H1 (cell line): ENCODE measurements at regions of chr13 and their contacts with region 1.

Region 1: DNA sequence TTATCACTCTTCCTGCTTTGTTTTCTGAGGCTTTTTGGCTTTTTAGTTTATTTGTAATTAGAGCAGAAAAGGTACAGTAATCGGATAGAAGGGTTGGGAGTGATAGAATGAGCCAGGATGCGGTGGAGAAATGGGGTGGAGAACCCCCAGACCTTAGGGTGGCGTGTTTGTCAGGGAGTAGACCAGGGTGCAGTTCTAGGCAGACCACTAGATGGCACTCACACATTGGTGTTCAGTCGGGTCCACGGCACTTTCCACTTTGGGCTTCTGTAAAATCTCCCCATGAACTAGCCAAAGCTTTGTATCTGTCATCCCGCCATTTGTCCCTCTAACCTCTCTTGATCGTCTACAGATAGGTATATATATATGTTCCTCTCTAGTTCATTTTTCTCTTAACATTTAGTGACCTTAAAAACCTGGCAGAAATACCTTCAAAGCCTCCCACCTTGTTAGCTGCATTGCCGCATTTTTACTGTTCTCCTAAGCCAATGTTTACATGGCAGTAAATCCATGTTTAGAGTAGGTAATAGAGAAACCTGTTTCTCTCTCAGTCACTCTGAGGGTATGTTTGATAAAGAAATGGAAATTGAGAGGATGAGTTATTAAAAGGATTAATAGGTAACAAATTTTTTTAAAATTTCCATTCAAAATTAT is 154.9 kb downstream of the TM9SF2 start:
- DNase-seq: peak; percentile 46 to 96
- H3K4me3 ChIP-seq: peak overlapping the region in 1 of 4 experiments; percentile 16; a peak in 1 of 8 replicates
- H3K27ac ChIP-seq: no peak overlapping the region
- H3K4me1 ChIP-seq: peaks cover 10 to 24% (median 19%) of the 10 kb centered on the region in 4 experiments
- H3K27me3 ChIP-seq: no peaks in the 10 kb centered on the region
- CTCF ChIP-seq: peak; percentile 92 to 98 (median 97)
- EP300 ChIP-seq: no peak
- POLR2A ChIP-seq: no peak
- RAD21 ChIP-seq: peak; percentile 99

Region 2: DNA sequence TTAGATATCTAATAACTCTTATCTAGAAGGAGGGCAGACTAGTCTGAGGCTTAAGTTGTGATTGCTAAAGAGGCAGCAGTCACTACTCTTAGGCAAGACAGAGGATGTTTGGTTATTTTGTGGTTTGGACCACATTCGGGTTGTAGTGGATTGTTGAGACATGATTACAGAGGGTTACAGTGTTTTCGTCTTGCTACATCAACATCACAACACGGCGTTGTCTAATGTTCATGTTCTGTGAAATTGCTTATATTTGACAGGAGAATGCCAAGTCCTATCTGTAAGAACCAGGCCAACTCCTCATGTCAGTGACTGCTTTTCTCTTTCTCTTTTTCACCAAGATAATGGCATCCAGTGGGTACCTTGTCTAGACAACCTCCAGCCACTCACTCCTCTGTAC is 171.7 kb before region 1 on chr13:
- CTCF ChIA-PET with region 1: no interaction called
- POLR2A ChIA-PET with region 1: no interaction called
- DNase-seq: no peak
- H3K4me3 ChIP-seq: no peak overlapping the region
- H3K27ac ChIP-seq: no peak overlapping the region
- H3K4me1 ChIP-seq: no peaks in the 10 kb centered on the region
- H3K27me3 ChIP-seq: no peaks in the 10 kb centered on the region; a peak in 1 of 7 replicates
- CTCF ChIP-seq: no peak
- EP300 ChIP-seq: no peak
- POLR2A ChIP-seq: no peak
- RAD21 ChIP-seq: no peak

Region 3: GRCh38 chr13:99542788-99543406 is 113.3 kb before region 1 on chr13:
- CTCF ChIA-PET with region 1: no interaction called
- POLR2A ChIA-PET with region 1: no interaction called
- DNase-seq: no peak
- H3K4me3 ChIP-seq: no peak overlapping the region
- H3K27ac ChIP-seq: no peak overlapping the region
- H3K4me1 ChIP-seq: no peaks in the 10 kb centered on the region
- H3K27me3 ChIP-seq: no peaks in the 10 kb centered on the region
- CTCF ChIP-seq: no peak
- EP300 ChIP-seq: no peak
- POLR2A ChIP-seq: no peak
- RAD21 ChIP-seq: no peak

Region 4: DNA sequence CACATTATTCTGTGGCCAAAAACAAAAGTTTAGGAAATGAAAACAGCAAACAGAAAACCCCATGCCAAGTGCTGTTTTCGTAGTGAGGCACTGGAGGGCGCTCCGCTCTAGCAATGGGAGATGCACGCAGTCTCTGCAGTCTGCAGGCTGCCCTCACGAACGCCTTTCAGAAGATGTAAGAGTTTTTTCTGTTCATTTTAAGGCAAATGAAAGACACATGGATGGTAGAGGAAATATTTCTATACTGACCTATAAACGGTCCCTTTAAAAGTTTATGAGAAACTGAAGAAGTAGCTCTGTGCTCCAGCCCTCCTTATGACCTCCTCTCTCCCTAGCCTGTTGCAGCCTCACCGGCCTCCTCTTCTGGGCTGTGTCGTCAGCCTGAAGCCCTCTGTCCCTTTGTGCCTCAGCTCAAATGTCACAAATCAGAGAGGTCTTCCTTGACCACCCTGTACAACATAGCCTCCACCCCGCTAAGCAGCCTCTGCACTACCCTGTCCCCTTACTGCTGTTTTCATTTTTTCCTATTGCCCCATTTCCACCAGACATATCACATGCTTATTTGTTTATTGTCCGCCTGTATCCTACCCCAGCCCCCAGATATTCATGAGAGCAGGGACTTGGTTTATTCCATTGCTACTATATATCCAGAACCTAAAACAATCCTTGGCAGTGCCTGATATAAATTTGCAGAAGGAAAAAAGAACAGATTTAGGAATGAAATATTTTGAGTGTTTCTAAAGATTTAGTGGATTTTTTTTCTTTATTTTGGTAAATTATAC is 38.6 kb before region 1 on chr13:
- CTCF ChIA-PET with region 1: interaction called, 21 read pairs
- POLR2A ChIA-PET with region 1: interaction called, 3 read pairs
- DNase-seq: peak in 1 of 2 experiments; percentile 73
- H3K4me3 ChIP-seq: no peak overlapping the region
- H3K27ac ChIP-seq: no peak overlapping the region
- H3K4me1 ChIP-seq: peaks cover 0 to 5% (median 0%) of the 10 kb centered on the region in 4 experiments; a peak in 2 of 7 replicates
- H3K27me3 ChIP-seq: no peaks in the 10 kb centered on the region
- CTCF ChIP-seq: peak; percentile 87 to 93 (median 88)
- EP300 ChIP-seq: no peak
- POLR2A ChIP-seq: no peak
- RAD21 ChIP-seq: peak; percentile 99

Region 5: GRCh38 chr13:99686157-99686572 is 29.9 kb after region 1 on chr13:
- CTCF ChIA-PET with region 1: interaction called, 10 read pairs
- POLR2A ChIA-PET with region 1: interaction called, 63 read pairs
- DNase-seq: peak in 1 of 2 experiments; percentile 52
- H3K4me3 ChIP-seq: peak overlapping the region in 1 of 4 experiments; percentile 28; a peak in 1 of 8 replicates
- H3K27ac ChIP-seq: peak overlapping the region; percentile 56; the same call in 1 of the 2 replicates
- H3K4me1 ChIP-seq: peaks cover 17 to 41% (median 35%) of the 10 kb centered on the region in 4 experiments
- H3K27me3 ChIP-seq: no peaks in the 10 kb centered on the region
- CTCF ChIP-seq: no peak
- EP300 ChIP-seq: no peak
- POLR2A ChIP-seq: no peak
- RAD21 ChIP-seq: no peak

Region 6: GRCh38 chr13:99766641-99767045 is 110.4 kb after region 1 on chr13:
- CTCF ChIA-PET with region 1: interaction called, 20 read pairs
- POLR2A ChIA-PET with region 1: interaction called, 6 read pairs
- DNase-seq: peak; percentile 33 to 63
- H3K4me3 ChIP-seq: no peak overlapping the region
- H3K27ac ChIP-seq: no peak overlapping the region; the same call in 1 of the 2 replicates
- H3K4me1 ChIP-seq: peaks cover 5 to 12% (median 7%) of the 10 kb centered on the region in 4 experiments; a peak in 5 of 7 replicates
- H3K27me3 ChIP-seq: no peaks in the 10 kb centered on the region
- CTCF ChIP-seq: peak in 2 of 3 experiments; percentile 64 to 78; a peak in 3 of 4 replicates
- EP300 ChIP-seq: no peak
- POLR2A ChIP-seq: no peak
- RAD21 ChIP-seq: peak; percentile 89 to 92

Region 7: DNA sequence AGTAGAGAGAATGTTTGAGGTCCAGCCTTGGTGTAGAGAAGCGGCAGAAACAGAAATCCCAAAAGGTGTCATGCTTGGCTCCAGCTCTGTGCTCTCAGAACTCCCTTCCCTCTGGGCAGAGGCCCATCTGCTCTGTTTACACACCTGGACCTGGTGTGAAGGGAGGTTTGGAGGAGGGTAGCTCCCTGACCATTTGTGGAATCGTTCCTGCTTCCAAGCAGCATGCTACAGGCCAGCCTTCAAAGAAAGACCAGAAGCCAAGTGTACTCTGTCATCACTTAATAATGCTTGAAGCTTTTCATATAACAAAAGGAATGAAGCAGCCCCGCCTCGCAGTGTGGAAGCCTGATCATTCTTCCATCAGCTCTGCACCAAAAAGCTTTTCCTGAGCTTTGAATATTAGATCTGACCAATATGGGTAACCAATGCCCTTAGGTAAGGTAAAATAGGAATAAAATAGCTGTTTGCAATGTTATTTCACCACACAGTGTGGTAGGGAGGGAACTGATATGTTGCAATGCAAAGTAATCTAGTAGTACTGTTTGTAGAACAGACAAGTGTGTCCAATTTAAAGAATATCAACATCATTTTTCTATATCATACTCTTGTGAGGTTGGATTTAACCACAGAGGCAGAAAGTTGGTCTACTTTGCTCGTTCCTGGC is 252.1 kb after region 1 on chr13:
- CTCF ChIA-PET with region 1: interaction called, 58 read pairs
- POLR2A ChIA-PET with region 1: no interaction called
- DNase-seq: no peak
- H3K4me3 ChIP-seq: no peak overlapping the region
- H3K27ac ChIP-seq: no peak overlapping the region
- H3K4me1 ChIP-seq: peaks cover 1 to 9% (median 3%) of the 10 kb centered on the region in 4 experiments; a peak in 4 of 7 replicates
- H3K27me3 ChIP-seq: no peaks in the 10 kb centered on the region; a peak in 1 of 7 replicates
- CTCF ChIP-seq: no peak
- EP300 ChIP-seq: no peak
- POLR2A ChIP-seq: no peak
- RAD21 ChIP-seq: no peak

Region 8: GRCh38 chr13:99955747-99956472 is 299.7 kb after region 1 on chr13:
- CTCF ChIA-PET with region 1: interaction called, 92 read pairs
- POLR2A ChIA-PET with region 1: interaction called, 7 read pairs
- DNase-seq: peak in 1 of 2 experiments; percentile 72
- H3K4me3 ChIP-seq: peak overlapping the region; percentile 45 to 69 (median 60)
- H3K27ac ChIP-seq: no peak overlapping the region
- H3K4me1 ChIP-seq: peaks cover 7 to 35% (median 20%) of the 10 kb centered on the region in 4 experiments
- H3K27me3 ChIP-seq: peaks cover 12 to 58% (median 47%) of the 10 kb centered on the region in 4 experiments; a peak in 6 of 7 replicates
- CTCF ChIP-seq: no peak
- EP300 ChIP-seq: no peak
- POLR2A ChIP-seq: no peak
- RAD21 ChIP-seq: no peak

Region 9: GRCh38 chr13:99990126-99990977 is 334.1 kb after region 1 on chr13:
- CTCF ChIA-PET with region 1: interaction called, 10 read pairs
- POLR2A ChIA-PET with region 1: interaction called, 6 read pairs
- DNase-seq: peak in 1 of 2 experiments; percentile 81
- H3K4me3 ChIP-seq: peak overlapping the region; percentile 31 to 72 (median 40)
- H3K27ac ChIP-seq: no peak overlapping the region
- H3K4me1 ChIP-seq: peaks cover 8 to 35% (median 25%) of the 10 kb centered on the region in 4 experiments
- H3K27me3 ChIP-seq: peaks cover 3 to 75% (median 45%) of the 10 kb centered on the region in 4 experiments; a peak in 6 of 7 replicates
- CTCF ChIP-seq: no peak
- EP300 ChIP-seq: no peak
- POLR2A ChIP-seq: no peak
- RAD21 ChIP-seq: no peak